Activated B cell treated with CpG ODN at 0.5 μM for 24 hours (primary cell): ENCODE measurements at regions of chr18 and their contacts with region 1.

Region 1: DNA sequence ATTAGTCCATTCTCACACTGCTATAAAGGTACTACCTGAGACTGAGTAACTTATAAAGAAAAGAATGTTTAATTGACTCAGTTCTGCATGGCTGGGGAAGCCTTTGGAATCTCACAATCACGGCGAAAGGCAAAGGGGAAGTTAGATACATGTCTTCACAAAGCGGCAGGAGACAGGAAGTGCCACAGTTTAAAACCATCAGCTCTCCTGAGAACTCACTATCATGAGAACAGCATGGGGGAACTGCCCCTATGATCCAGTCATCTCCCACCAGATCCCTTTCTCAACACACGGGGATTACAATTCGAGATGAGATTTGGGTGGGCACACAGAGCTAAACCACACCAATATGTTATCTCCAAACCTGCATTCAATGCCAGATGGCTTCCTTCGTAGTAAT is 716.1 kb downstream of the DCC start:
- DNase-seq: no peak
- ATAC-seq: no peak
- H3K4me3 Mint-ChIP-seq: no peak overlapping the region
- H3K27ac Mint-ChIP-seq: no peak overlapping the region
- H3K4me1 Mint-ChIP-seq: no peaks in the 10 kb centered on the region
- H3K27me3 Mint-ChIP-seq: no peaks in the 10 kb centered on the region
- CTCF ChIP-seq: no peak

Region 2: DNA sequence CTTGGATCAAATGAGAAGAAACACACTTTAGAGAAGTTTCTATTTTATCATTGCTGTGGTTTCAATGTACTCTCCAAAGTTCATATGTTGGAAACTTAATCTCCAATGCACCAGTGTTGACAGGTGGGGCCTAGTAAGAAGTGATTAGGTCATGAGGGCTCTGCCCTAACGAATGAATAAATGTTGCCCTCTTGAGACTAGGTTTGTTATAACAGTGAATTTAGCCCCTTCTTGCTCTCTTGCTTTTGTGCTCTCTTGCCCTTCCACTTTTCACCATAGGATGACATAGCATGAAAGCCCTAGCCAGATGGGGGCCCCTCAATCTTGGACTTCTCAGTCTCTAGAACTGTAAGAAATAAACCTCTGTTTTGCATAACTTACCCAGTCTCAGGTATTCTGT is 51.3 kb before region 1 on chr18:
- CTCF ChIA-PET with region 1: no interaction called
- POLR2A ChIA-PET with region 1: no interaction called
- intact Hi-C with region 1: loop called (anchors 5 kb)
- DNase-seq: no peak
- ATAC-seq: no peak
- H3K4me3 Mint-ChIP-seq: no peak overlapping the region
- H3K27ac Mint-ChIP-seq: no peak overlapping the region
- H3K4me1 Mint-ChIP-seq: no peaks in the 10 kb centered on the region
- H3K27me3 Mint-ChIP-seq: no peaks in the 10 kb centered on the region
- CTCF ChIP-seq: no peak